H1 (cell line): ENCODE measurements at regions of chr15 and their contacts with region 1.

Region 1: DNA sequence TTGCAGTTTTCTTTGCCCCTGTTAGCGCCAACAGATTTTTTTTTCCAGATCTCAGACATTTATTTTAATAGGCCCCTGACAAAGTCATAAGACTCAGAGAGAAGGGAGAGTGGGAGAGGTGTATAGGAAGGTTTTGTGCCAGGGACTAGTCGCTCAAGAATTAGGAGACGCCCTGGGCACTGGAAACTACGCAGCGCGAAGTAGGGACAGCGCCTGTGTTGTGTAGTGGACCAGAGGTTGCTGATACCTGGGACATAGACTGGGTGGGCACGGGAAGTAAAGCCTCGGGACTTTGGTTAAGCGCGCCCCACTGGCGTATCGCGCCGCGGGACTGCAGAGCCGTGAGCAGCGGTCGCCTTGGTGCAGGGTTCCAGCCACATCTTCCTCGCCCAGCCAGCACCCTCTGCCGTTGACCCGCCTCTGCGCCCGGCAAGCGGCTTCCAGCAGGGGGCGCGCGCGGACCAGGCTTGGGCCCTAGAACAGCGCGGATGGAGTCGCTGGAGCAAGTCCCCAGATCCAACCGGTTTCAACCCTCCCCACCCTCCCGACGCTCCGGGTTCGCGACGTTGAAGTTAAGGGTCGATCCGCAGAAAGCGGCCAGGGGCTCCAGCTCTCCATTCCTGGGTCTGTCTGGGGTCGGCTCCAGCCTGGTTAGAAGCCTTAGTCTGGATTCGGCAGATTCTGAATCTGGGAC is 3.0 kb upstream of the ISLR2 start:
- DNase-seq: peak; percentile 78 to 100
- H3K4me3 ChIP-seq: peak overlapping the region in 3 of 4 experiments; percentile 26 to 57 (median 36); a peak in 7 of 8 replicates
- H3K27ac ChIP-seq: no peak overlapping the region
- H3K4me1 ChIP-seq: peaks cover 2 to 55% (median 42%) of the 10 kb centered on the region in 4 experiments
- H3K27me3 ChIP-seq: peaks cover 49 to 64% (median 57%) of the 10 kb centered on the region in 4 experiments
- CTCF ChIP-seq: peak in 2 of 3 experiments; percentile 99; a peak in 3 of 4 replicates
- EP300 ChIP-seq: no peak
- POLR2A ChIP-seq: no peak
- RAD21 ChIP-seq: peak; percentile 96 to 99

Region 2: DNA sequence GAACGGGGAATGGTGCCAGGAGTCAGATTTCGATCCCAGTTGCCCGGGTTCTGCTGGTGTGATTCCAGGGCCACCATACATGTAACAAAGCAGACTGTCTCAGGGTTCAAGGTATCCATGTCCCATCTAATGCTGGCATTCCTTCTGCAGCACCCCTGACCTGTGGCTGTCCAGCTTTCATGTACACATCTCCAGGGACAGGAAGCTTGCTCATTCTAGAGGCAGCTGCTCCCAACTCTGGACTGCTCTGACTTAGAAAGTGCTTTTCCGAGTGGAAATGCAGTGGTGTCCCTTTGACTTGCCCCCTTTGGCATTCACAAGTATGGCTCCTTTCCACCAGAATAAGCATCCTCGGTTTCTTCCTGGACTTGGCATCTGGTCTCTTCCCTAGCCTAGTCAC is 102.0 kb before region 1 on chr15:
- CTCF ChIA-PET with region 1: no interaction called
- POLR2A ChIA-PET with region 1: no interaction called
- DNase-seq: no peak
- H3K4me3 ChIP-seq: no peak overlapping the region
- H3K27ac ChIP-seq: 0 out of 2 replicates have a peak overlapping the region, but pooled peaks have one; percentile 38
- H3K4me1 ChIP-seq: no peaks in the 10 kb centered on the region
- H3K27me3 ChIP-seq: no peaks in the 10 kb centered on the region
- CTCF ChIP-seq: no peak
- EP300 ChIP-seq: no peak
- POLR2A ChIP-seq: no peak
- RAD21 ChIP-seq: no peak

Region 3: DNA sequence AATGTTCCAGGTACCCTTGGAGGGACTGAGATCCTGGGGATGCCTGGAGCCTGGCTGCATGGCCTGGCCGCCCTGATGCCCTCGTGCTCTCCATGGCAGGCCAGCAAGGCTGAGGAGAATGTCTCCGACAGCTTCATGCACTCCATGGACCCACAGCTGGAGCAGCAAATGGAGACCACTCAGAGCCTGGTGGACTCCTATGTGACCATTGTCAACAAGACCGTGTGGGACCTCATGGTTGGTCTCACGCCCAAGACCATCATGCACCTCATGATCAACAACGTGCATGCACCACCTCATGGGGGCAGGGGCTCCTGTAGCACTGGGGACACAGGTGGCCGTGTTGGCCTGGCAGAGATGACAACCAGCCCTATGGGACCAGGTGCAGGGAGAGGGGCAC is 64.7 kb before region 1 on chr15:
- CTCF ChIA-PET with region 1: no interaction called
- POLR2A ChIA-PET with region 1: no interaction called
- DNase-seq: no peak
- H3K4me3 ChIP-seq: no peak overlapping the region
- H3K27ac ChIP-seq: no peak overlapping the region
- H3K4me1 ChIP-seq: no peaks in the 10 kb centered on the region
- H3K27me3 ChIP-seq: no peaks in the 10 kb centered on the region
- CTCF ChIP-seq: no peak
- EP300 ChIP-seq: no peak
- POLR2A ChIP-seq: no peak
- RAD21 ChIP-seq: no peak

Region 4: DNA sequence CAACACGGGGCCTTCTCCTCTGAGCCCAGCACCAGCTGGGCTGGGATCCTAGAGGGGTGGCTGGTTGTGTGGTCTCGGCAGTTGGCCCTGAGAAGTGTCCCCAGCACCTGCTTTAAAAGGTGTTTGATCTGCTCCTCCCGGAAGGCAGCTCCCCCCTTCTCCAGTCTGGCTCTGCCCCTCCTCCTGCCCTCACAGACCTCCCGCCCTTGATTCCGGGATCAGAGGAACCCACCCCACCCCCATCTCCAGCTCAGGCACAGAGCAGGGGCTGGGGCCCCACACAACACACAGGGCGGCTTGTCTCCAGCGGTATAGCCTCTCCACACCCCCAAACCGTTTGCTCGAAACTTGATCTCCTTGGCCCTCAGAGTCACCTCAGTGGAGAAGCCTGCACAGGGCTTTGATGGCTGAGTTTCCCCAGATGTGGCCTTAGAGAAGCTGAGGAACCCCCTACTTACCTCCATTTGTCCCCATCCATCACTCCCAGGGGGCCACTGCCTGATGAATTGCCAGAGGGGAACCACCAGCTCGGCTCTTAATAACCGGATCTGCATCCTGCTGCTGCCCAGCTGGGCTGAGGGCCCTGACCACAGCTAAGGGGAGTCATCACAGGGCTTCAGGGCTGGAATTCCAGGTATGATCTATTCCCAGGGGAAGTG is 81.6 kb after region 1 on chr15:
- CTCF ChIA-PET with region 1: interaction called, 12 read pairs
- POLR2A ChIA-PET with region 1: interaction called, 5 read pairs
- DNase-seq: peak in 1 of 2 experiments; percentile 73
- H3K4me3 ChIP-seq: peak overlapping the region in 1 of 4 experiments; percentile 21; a peak in 4 of 8 replicates
- H3K27ac ChIP-seq: no peak overlapping the region
- H3K4me1 ChIP-seq: peaks cover 22 to 59% (median 42%) of the 10 kb centered on the region in 4 experiments
- H3K27me3 ChIP-seq: peaks cover 0 to 11% (median 4%) of the 10 kb centered on the region in 4 experiments; a peak in 3 of 7 replicates
- CTCF ChIP-seq: no peak
- EP300 ChIP-seq: no peak
- POLR2A ChIP-seq: no peak
- RAD21 ChIP-seq: no peak

Region 5: GRCh38 chr15:74222240-74223119 is 95.1 kb after region 1 on chr15:
- CTCF ChIA-PET with region 1: interaction called, 13 read pairs
- POLR2A ChIA-PET with region 1: interaction called, 6 read pairs
- DNase-seq: no peak
- H3K4me3 ChIP-seq: peak overlapping the region in 1 of 4 experiments; percentile 36; a peak in 1 of 8 replicates
- H3K27ac ChIP-seq: no peak overlapping the region
- H3K4me1 ChIP-seq: peaks cover 3 to 45% (median 30%) of the 10 kb centered on the region in 4 experiments
- H3K27me3 ChIP-seq: peaks cover 25 to 92% (median 86%) of the 10 kb centered on the region in 4 experiments
- CTCF ChIP-seq: no peak
- EP300 ChIP-seq: no peak
- POLR2A ChIP-seq: no peak
- RAD21 ChIP-seq: no peak

Region 6: GRCh38 chr15:74315626-74316025 is 188.2 kb after region 1 on chr15:
- CTCF ChIA-PET with region 1: interaction called, 62 read pairs
- POLR2A ChIA-PET with region 1: interaction called, 4 read pairs
- DNase-seq: no peak
- H3K4me3 ChIP-seq: no peak overlapping the region
- H3K27ac ChIP-seq: no peak overlapping the region
- H3K4me1 ChIP-seq: peaks cover 3 to 45% (median 31%) of the 10 kb centered on the region in 4 experiments
- H3K27me3 ChIP-seq: peaks cover 0 to 3% (median under 1%) of the 10 kb centered on the region in 4 experiments; a peak in 2 of 7 replicates
- CTCF ChIP-seq: no peak
- EP300 ChIP-seq: no peak
- POLR2A ChIP-seq: no peak
- RAD21 ChIP-seq: no peak